ENCODE measurements at regions of chr11 and their contacts with region 1.

Region 1: DNA sequence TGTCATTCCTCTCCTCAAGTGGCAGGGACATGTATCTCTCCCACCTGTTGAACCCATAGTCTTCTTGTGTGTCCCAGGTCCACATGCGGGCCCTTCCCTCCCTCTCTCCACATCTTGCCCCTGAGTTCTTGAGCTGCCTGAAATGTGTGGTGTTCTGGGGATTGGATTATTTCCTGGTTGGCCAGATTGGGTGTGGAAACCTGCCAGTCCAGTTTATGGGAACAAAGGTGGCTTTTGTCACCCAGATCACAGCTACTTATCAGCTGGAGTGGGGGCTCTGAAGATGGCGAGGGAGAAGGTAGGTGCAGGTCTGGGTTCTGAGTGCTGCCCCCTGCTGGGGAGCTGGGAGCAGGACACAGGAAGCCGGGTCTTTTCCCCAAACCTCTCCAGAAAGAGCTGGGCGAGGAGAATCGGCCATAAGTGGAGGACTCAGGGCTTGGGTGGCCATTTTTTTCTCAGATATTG is 14.2 kb downstream of the DTX4 start:
- DNase-seq: peak; percentile 57
- ATAC-seq: peak; percentile 92
- H3K4me3 ChIP-seq: peak overlapping the region in 1 of 2 experiments; percentile 7; a peak in 1 of 4 replicates
- H3K27ac ChIP-seq: no peak overlapping the region; the same call in 1 of the 2 replicates
- H3K4me1 ChIP-seq: peaks cover 13 to 20% of the 10 kb centered on the region in 2 experiments; a peak in 3 of 4 replicates
- H3K27me3 ChIP-seq: no peaks in the 10 kb centered on the region
- CTCF ChIP-seq: peak; percentile 61 to 90 (median 85)
- POLR2A ChIP-seq: no peak
- RAD21 ChIP-seq: peak; percentile 42; the same call in 1 of the 2 replicates

Region 2: DNA sequence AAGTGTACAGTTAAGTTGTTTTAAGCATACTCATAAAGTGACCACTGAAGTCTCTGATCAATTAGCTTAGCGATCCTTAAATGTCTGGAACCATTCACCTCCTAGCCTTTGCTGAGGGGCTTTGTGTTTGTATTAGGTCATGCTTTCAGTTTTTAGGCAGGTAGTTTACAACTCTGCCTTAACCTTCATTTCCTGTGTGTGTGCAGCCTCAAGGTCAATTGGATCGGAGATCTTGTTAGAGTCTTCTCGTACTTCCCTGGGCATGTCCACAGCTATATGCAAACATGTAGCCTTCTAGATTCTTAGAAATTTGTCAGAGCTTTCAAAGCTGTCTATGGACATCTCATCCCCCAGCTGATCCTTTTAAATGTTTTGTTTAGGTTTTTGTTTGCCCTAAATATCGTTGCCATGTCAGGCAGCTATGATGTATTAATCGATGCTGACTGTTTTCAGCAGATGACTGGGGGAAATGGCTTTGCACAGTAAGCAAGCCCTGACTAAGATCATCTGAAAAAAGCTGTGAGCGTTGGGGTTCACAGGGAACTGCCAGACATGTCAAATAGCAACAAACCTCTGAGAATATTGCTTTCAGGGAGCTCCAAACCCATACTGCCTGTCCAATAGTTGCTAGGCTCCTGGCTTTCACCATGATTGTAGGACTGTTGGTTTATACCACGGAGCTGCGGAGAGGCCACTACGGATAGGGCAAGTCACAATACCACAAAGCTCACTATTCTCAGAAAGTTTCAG is 500.0 kb before region 1 on chr11:
- CTCF ChIA-PET with region 1: no interaction called
- POLR2A ChIA-PET with region 1: no interaction called
- RAD21 ChIA-PET with region 1: no interaction called
- intact Hi-C with region 1: no loop called
- DNase-seq: no peak
- ATAC-seq: no peak
- H3K4me3 ChIP-seq: no peak overlapping the region
- H3K27ac ChIP-seq: no peak overlapping the region
- H3K4me1 ChIP-seq: no peaks in the 10 kb centered on the region; a peak in 1 of 4 replicates
- H3K27me3 ChIP-seq: no peaks in the 10 kb centered on the region
- CTCF ChIP-seq: no peak
- POLR2A ChIP-seq: no peak
- RAD21 ChIP-seq: no peak

Region 3: DNA sequence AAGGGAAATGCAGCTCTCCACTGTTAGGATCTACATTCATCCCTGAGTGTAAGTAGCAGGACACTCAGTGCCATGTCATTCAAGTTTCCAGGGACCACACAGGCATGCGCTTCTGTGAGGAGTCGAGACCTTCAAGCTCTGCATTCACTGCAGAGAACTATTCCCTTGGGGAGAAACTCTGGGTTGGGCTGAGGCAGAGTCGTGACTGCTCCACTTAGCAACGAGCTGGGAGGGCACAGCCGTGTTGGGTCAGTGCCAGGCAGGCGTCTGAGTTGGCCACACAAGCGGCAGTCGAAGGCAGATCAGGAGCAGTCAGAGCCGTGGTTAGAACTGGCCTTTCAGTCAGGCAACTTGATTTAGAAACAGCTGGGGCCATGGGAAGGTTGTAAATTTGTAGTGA is 11.8 kb after region 1 on chr11:
- CTCF ChIA-PET with region 1: interaction called, 24 read pairs
- POLR2A ChIA-PET with region 1: no interaction called
- RAD21 ChIA-PET with region 1: no interaction called
- intact Hi-C with region 1: no loop called
- DNase-seq: no peak
- ATAC-seq: no peak
- H3K4me3 ChIP-seq: no peak overlapping the region
- H3K27ac ChIP-seq: no peak overlapping the region
- H3K4me1 ChIP-seq: no peaks in the 10 kb centered on the region
- H3K27me3 ChIP-seq: no peaks in the 10 kb centered on the region
- CTCF ChIP-seq: no peak
- POLR2A ChIP-seq: no peak
- RAD21 ChIP-seq: no peak

Region 4: DNA sequence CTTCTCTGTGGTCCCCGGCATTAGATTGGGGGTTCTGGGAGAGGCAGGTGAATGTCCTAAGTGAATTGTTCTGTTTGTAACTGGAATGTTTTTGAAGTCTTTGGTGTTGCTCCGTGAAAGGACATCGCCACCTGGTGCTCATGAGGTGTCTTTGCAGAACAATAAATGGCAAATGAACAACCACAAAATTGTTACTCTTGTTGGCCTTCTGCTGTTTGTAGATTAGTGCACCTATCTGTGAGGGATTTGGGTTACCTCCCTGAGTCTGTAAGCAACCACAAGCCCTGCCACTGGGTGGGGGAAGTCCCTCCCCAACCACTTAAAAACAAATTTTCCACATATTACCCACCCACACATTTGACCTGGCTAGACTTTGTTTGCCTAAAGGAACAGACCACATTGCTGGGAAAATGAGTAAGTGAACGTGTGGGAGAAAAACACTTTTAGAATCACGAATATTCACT is 21.9 kb after region 1 on chr11:
- CTCF ChIA-PET with region 1: interaction called, 24 read pairs
- POLR2A ChIA-PET with region 1: interaction called, 3 read pairs
- RAD21 ChIA-PET with region 1: no interaction called
- intact Hi-C with region 1: no loop called
- DNase-seq: no peak
- ATAC-seq: peak; percentile 58
- H3K4me3 ChIP-seq: no peak overlapping the region
- H3K27ac ChIP-seq: no peak overlapping the region
- H3K4me1 ChIP-seq: no peaks in the 10 kb centered on the region; a peak in 2 of 4 replicates
- H3K27me3 ChIP-seq: no peaks in the 10 kb centered on the region
- CTCF ChIP-seq: peak; percentile 61 to 78 (median 70)
- POLR2A ChIP-seq: no peak
- RAD21 ChIP-seq: peak; percentile 72